ENCODE measurements at regions of chr22 and their contacts with region 1.

Region 1: DNA sequence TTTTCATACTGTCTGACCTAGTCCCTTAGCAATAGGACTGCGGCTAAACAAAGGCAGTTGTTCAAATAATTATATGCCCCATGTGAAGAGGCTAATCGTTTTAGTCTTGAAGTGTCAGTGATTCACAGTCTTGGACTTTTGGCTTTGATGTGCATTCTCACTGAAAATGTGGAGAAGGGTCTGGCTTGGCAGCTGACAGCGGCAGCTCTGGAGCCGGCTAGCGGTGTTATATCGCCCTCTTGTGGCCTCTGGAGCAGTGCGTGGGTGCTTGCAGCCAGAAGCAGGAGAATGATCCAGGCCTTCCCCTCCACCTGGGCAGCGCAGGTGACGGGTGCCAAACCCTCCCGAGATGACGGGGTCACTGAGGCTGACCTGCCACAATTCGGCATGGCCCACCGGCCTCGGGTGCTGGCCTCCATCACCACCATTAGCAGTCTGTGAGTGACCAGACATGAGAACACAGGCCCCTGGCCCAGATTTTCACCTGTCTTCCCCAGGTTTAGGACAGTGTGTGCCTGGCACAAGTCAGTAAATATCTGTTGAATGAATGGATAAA is 90.3 kb upstream of the PITPNB start:
- DNase-seq: peak; percentile 71 to 76 (median 74)
- ATAC-seq: peak; percentile 84 to 93 (median 90)
- H3K4me3 ChIP-seq: no peak overlapping the region
- H3K27ac ChIP-seq: no peak overlapping the region
- H3K4me1 ChIP-seq: no peaks in the 10 kb centered on the region
- H3K27me3 ChIP-seq: no peaks in the 10 kb centered on the region
- CTCF ChIP-seq: peak; percentile 93 to 97 (median 94)
- POLR2A ChIP-seq: no peak

Region 2: DNA sequence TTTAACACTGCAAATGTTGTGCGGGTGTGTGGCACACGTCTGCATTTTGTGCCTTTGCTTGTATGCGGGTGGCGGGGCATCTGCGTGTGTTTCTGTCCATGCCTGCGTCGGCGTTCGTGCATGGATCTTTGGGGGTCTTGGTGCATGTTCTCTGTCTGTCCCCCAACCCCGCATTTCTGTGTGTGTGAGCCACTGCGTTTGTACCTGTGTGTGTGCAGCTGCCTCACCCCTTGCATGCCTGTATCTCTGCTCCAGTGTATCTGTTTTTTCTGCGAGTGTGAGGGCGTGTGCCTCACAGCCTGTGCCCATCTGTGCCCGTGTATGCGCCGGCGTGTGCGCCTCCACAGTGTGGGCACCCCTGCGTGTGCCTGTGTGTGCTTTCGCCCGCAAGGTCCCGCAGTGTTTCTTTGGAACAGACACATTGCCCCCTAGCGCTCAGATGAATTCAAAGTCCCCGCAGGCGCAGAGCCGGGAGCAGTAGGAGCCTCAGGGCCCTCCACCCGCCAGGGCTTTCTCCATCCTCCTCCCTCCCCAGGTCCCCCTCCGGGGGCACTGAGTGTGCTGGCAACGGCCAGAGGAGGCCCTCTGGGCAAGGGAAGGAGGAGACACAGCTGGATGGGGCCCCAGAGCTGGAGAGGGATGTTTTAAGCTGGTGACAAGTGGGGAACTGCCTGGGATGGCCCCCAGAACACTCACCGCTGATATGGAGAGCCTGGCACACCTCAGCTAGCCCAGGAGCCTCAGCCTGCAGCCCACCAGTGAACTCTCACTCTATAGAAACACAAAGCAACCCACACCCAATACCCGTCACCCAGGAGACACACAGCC is 204.7 kb before region 1 on chr22:
- intact Hi-C with region 1: loop called in 1 of 2 experiments (anchors 10 kb)
- DNase-seq: peak; percentile 60 to 69 (median 69)
- ATAC-seq: peak; percentile 62 to 67 (median 66)
- H3K4me3 ChIP-seq: no peak overlapping the region
- H3K27ac ChIP-seq: no peak overlapping the region
- H3K4me1 ChIP-seq: peaks cover 0 to 15% (median 6%) of the 10 kb centered on the region in 4 donors
- H3K27me3 ChIP-seq: peaks cover 0 to 3% of the 10 kb centered on the region in 2 donors
- CTCF ChIP-seq: peak; percentile 64 to 76 (median 72)
- POLR2A ChIP-seq: no peak

Region 3: GRCh38 chr22:27880778-27881394 is 128.5 kb before region 1 on chr22:
- intact Hi-C with region 1: loop called (anchors 5 to 10 kb)
- DNase-seq: no peak
- ATAC-seq: peak; percentile 83 to 88 (median 86)
- H3K4me3 ChIP-seq: no peak overlapping the region
- H3K27ac ChIP-seq: peak overlapping the region; percentile 2 to 69 (median 61)
- H3K4me1 ChIP-seq: peaks cover 0 to 31% (median 13%) of the 10 kb centered on the region in 4 donors
- H3K27me3 ChIP-seq: no peaks in the 10 kb centered on the region
- CTCF ChIP-seq: peak; percentile 77 to 87 (median 84)
- POLR2A ChIP-seq: no peak

Region 4: GRCh38 chr22:27919942-27920687 is 89.2 kb before region 1 on chr22:
- intact Hi-C with region 1: loop called in 1 of 2 experiments (anchors 10 kb)
- DNase-seq: no peak
- ATAC-seq: peak; percentile 15 to 58 (median 38)
- H3K4me3 ChIP-seq: peak overlapping the region; percentile 46 to 92 (median 86)
- H3K27ac ChIP-seq: peak overlapping the region; percentile 96 to 99 (median 96)
- H3K4me1 ChIP-seq: peaks cover 0 to 36% (median 13%) of the 10 kb centered on the region in 4 donors
- H3K27me3 ChIP-seq: no peaks in the 10 kb centered on the region
- CTCF ChIP-seq: peak in 3 of 4 donors; percentile 8 to 26 (median 22)
- POLR2A ChIP-seq: no peak